Pancreas (tissue), 10 donors: ENCODE measurements at regions of chr11 and their contacts with region 1.

Region 1: GRCh38 chr11:118198370-118198769 is 21.9 kb upstream of the SCN2B start:
- DNase-seq: peak; percentile 70 to 90 (median 80)
- ATAC-seq: peak; percentile 41 to 63 (median 58)
- H3K4me3 ChIP-seq: no peak overlapping the region
- H3K27ac ChIP-seq: no peak overlapping the region
- H3K4me1 ChIP-seq: peaks cover 16 to 32% (median 24%) of the 10 kb centered on the region in 3 donors
- H3K27me3 ChIP-seq: no peaks in the 10 kb centered on the region
- CTCF ChIP-seq: peak; percentile 67 to 82 (median 75)

Region 2: DNA sequence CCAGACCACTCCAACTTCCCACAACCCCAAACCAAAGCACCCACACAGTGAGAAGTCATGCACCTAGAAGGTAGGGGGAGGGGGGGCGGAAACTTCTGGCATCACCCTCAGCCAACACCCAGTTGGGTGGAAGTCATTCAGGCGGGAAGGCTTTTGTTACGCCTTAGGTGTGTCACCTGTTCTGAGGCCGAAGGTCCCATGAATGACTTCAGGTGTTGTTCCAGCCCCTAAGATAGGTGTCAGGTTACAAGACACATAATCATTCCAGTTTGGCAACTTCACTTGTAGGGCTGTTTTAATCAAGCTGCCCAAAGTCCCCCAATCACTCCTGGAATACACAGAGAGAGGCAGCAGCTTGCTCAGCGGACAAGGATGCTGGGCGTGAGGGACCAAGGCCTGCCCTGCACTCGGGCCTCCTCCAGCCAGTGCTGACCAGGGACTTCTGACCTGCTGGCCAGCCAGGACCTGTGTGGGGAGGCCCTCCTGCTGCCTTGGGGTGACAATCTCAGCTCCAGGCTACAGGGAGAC is 121.6 kb before region 1 on chr11 and contains the start of gene TMPRSS4:
- intact Hi-C with region 1: no loop called
- DNase-seq: peak in 4 of 6 donors; percentile 31 to 47 (median 38)
- ATAC-seq: peak; percentile 80 to 90 (median 86)
- H3K4me3 ChIP-seq: no peak within 1 kb of the TSS
- H3K27ac ChIP-seq: no peak within 1 kb of the TSS
- H3K4me1 ChIP-seq: no peaks in the 10 kb centered on the region
- H3K27me3 ChIP-seq: no peaks in the 10 kb centered on the region
- CTCF ChIP-seq: no peak
- total RNA-seq, gene TMPRSS4: 0.39 to 2.2 (median 0.65) TPM in 4 of 6 donors, not detected in the others

Region 3: DNA sequence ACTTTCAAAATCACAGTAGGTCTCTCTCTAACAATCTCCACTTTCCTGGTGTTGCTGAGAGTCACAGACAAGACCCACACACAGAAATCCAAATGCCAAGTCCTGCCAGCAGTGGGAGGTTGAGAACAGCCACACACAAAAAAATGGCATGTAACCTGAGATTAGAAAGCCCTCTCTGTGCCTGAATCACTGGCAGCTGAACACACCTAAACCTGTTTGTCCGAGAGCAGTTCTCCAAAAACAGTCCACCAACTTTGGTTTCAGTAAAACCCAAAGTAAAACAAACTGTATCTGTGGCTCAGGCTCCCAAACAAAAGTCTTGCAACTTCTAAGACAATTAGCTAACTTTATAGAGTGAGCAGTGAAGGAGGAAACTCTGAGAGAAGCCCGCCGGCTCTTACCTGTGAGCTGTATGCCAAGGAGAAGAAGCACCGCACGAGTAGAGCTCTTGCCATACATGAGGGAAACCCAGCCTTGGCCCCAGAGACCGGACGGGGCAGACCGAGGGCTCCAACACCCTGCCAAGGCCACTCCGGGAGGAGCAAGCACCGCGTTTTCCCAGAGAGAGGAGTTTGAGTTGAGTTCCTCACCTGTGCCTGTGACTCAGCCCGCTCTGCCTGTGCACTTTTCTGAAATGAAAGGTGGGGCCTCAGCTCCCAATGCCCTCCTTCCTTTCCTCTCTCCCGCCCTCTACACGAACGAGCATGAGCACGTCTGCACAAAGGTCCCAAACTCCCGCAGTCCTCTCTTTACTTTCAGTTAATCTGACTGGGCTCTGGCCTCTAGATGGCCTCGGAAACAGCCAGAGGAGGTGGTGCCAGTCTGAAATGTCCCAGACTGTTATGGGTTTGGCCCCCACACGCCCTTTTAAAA is 65.6 kb after region 1 on chr11 and contains the start of gene MPZL2:
- intact Hi-C with region 1: no loop called
- DNase-seq: peak; percentile 76 to 84 (median 78)
- ATAC-seq: peak; percentile 88 to 94 (median 93)
- H3K4me3 ChIP-seq: peak within 1 kb of the TSS; percentile 15 to 57 (median 27)
- H3K27ac ChIP-seq: peak within 1 kb of the TSS; percentile 56 to 93 (median 87)
- H3K4me1 ChIP-seq: peaks cover 0 to 17% (median 0%) of the 10 kb centered on the region in 3 donors
- H3K27me3 ChIP-seq: no peaks in the 10 kb centered on the region
- CTCF ChIP-seq: no peak
- total RNA-seq, gene MPZL2: 6.0 to 20.7 (median 13.8) TPM

Region 4: GRCh38 chr11:118277306-118277705 is 78.9 kb after region 1 on chr11:
- intact Hi-C with region 1: loop called in 2 of 3 experiments (anchors 10 kb)
- DNase-seq: no peak
- ATAC-seq: peak in 2 of 4 donors; percentile 48 to 67
- H3K4me3 ChIP-seq: no peak overlapping the region
- H3K27ac ChIP-seq: peak overlapping the region in 1 of 4 donors; percentile 15
- H3K4me1 ChIP-seq: peaks cover 0 to 4% (median 0%) of the 10 kb centered on the region in 3 donors
- H3K27me3 ChIP-seq: no peaks in the 10 kb centered on the region
- CTCF ChIP-seq: no peak

Region 5: GRCh38 chr11:118290923-118291322 is 92.6 kb after region 1 on chr11:
- intact Hi-C with region 1: loop called in 1 of 3 experiments (anchors 10 kb)
- DNase-seq: peak in 3 of 6 donors; percentile 37 to 61 (median 49)
- ATAC-seq: peak; percentile 83 to 97 (median 94)
- H3K4me3 ChIP-seq: no peak overlapping the region
- H3K27ac ChIP-seq: no peak overlapping the region
- H3K4me1 ChIP-seq: no peaks in the 10 kb centered on the region
- H3K27me3 ChIP-seq: peaks cover 0 to 7% (median 1%) of the 10 kb centered on the region in 4 donors
- CTCF ChIP-seq: peak in 3 of 4 donors; percentile 27 to 32 (median 32)

Region 6: GRCh38 chr11:118304568-118305248 is 106.3 kb after region 1 on chr11 and contains the start of gene CD3E:
- intact Hi-C with region 1: loop called in 1 of 3 experiments (anchors 5 kb)
- DNase-seq: no peak
- ATAC-seq: no peak
- H3K4me3 ChIP-seq: no peak within 1 kb of the TSS
- H3K27ac ChIP-seq: no peak within 1 kb of the TSS
- H3K4me1 ChIP-seq: no peaks in the 10 kb centered on the region
- H3K27me3 ChIP-seq: no peaks in the 10 kb centered on the region
- CTCF ChIP-seq: no peak
- total RNA-seq, gene CD3E: 0.23 to 2.1 (median 1.5) TPM

Region 7: DNA sequence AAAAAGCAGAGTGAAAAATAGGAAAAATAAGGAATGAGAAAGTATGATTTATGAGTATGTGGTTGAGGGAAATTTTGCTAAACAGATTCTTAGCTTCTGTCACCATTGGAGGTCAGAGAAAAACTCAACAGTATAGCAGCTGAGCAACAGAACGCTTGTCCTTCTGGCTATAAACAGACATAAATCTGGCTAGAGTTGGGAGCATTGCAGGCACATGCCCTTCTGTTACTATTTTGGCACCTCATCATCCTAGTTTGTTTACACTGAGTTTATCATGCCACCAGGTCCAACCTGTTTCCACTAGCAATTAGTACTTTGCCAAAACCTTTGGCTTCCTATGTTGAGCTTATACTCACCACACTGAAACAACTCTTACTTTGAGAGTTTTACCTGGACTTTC is 167.9 kb after region 1 on chr11:
- intact Hi-C with region 1: loop called in 1 of 3 experiments (anchors 10 kb)
- DNase-seq: peak in 2 of 6 donors; percentile 27 to 36
- ATAC-seq: peak; percentile 37 to 94 (median 71)
- H3K4me3 ChIP-seq: no peak overlapping the region
- H3K27ac ChIP-seq: no peak overlapping the region
- H3K4me1 ChIP-seq: peaks cover 0 to 17% (median 3%) of the 10 kb centered on the region in 3 donors
- H3K27me3 ChIP-seq: no peaks in the 10 kb centered on the region
- CTCF ChIP-seq: no peak

Region 8: GRCh38 chr11:118380571-118380970 is 182.2 kb after region 1 on chr11:
- intact Hi-C with region 1: no loop called
- DNase-seq: no peak
- ATAC-seq: no peak
- H3K4me3 ChIP-seq: no peak overlapping the region
- H3K27ac ChIP-seq: no peak overlapping the region
- H3K4me1 ChIP-seq: no peaks in the 10 kb centered on the region
- H3K27me3 ChIP-seq: no peaks in the 10 kb centered on the region
- CTCF ChIP-seq: no peak

Region 9: GRCh38 chr11:118485273-118485672 is 286.9 kb after region 1 on chr11:
- intact Hi-C with region 1: no loop called
- DNase-seq: no peak
- ATAC-seq: no peak
- H3K4me3 ChIP-seq: no peak overlapping the region
- H3K27ac ChIP-seq: no peak overlapping the region
- H3K4me1 ChIP-seq: no peaks in the 10 kb centered on the region
- H3K27me3 ChIP-seq: no peaks in the 10 kb centered on the region
- CTCF ChIP-seq: no peak